ENCODE measurements at regions of chr5 and their contacts with region 1.

Region 1: DNA sequence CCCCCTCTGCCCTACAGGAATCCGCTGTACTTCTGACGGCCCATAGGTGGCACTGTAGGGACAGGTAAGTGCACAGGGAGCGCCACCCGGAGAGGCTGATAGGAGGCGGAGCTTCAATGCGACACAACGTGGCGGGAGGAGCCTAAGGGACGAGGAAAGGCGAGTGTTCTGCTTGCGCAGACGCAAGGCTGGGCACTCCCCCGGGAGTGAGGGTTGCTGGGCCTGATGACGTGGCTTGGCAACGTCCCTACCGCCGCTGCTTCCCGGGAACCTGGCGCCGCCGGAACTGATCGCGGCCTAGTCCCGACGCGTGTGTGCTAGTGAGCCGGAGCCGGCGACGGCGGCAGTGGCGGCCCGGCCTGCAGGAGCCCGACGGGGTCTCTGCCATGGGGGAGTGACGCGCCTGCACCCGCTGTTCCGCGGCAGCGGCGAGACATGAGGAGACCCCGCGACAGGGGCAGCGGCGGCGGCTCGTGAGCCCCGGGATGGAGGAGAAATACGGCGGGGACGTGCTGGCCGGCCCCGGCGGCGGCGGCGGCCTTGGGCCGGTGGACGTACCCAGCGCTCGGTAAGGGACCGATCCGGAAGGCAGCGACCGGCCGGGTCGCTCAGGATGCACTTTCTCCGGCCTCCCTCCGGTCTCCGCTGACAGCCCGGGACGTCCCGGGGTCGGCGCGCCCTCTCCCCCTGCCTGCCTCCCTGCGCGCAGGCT is at the start of gene SLC30A5:
- DNase-seq: peak; percentile 96
- H3K4me3 ChIP-seq: peak within 1 kb of the TSS; percentile 69 to 80
- H3K27ac ChIP-seq: peak within 1 kb of the TSS; percentile 77 to 90
- H3K4me1 ChIP-seq: peaks cover 0 to 5% of the 10 kb centered on the region in 2 experiments; a peak in 1 of 4 replicates
- H3K27me3 ChIP-seq: no peaks in the 10 kb centered on the region
- CTCF ChIP-seq: peak; percentile 93
- EP300 ChIP-seq: no peak; a peak in 2 of 4 replicates
- RAD21 ChIP-seq: peak; percentile 93
- polyA plus RNA-seq, gene SLC30A5: 28.5 and 32.9 TPM in 2 replicates

Region 2: GRCh38 chr5:68261569-68262065 is 832.3 kb before region 1 on chr5:
- CTCF ChIA-PET with region 1: no interaction called
- POLR2A ChIA-PET with region 1: no interaction called
- DNase-seq: no peak
- H3K4me3 ChIP-seq: no peak overlapping the region
- H3K27ac ChIP-seq: peak overlapping the region in 1 of 2 experiments; percentile 68; a peak in 2 of 4 replicates
- H3K4me1 ChIP-seq: peaks cover 15 to 49% of the 10 kb centered on the region in 2 experiments; a peak in 3 of 4 replicates
- H3K27me3 ChIP-seq: no peaks in the 10 kb centered on the region
- CTCF ChIP-seq: peak; percentile 26; the same call in 1 of the 2 replicates
- EP300 ChIP-seq: no peak
- RAD21 ChIP-seq: peak; percentile 19; the same call in 1 of the 2 replicates

Region 3: GRCh38 chr5:68872088-68872839 is 221.7 kb before region 1 on chr5:
- CTCF ChIA-PET with region 1: no interaction called
- POLR2A ChIA-PET with region 1: no interaction called
- DNase-seq: peak; percentile 74
- H3K4me3 ChIP-seq: no peak overlapping the region
- H3K27ac ChIP-seq: peak overlapping the region in 1 of 2 experiments; percentile 89; a peak in 2 of 4 replicates
- H3K4me1 ChIP-seq: peaks cover 0 to 10% of the 10 kb centered on the region in 2 experiments; a peak in 3 of 4 replicates
- H3K27me3 ChIP-seq: no peaks in the 10 kb centered on the region
- CTCF ChIP-seq: no peak
- EP300 ChIP-seq: peak; percentile 17 to 86; a peak in 3 of 4 replicates
- RAD21 ChIP-seq: no peak; the same call in 1 of the 2 replicates

Region 4: GRCh38 chr5:69024241-69024651 is 69.7 kb before region 1 on chr5:
- CTCF ChIA-PET with region 1: interaction called, 16 read pairs
- POLR2A ChIA-PET with region 1: no interaction called
- DNase-seq: peak; percentile 68
- H3K4me3 ChIP-seq: no peak overlapping the region
- H3K27ac ChIP-seq: 0 out of 4 replicates have a peak overlapping the region, but pooled peaks of 1 of the 2 experiments have one; percentile 16
- H3K4me1 ChIP-seq: peaks cover 0 to 3% of the 10 kb centered on the region in 2 experiments; a peak in 1 of 4 replicates
- H3K27me3 ChIP-seq: no peaks in the 10 kb centered on the region
- CTCF ChIP-seq: peak; percentile 68
- EP300 ChIP-seq: no peak
- RAD21 ChIP-seq: peak; percentile 92

Region 5: GRCh38 chr5:69032009-69032408 is 61.9 kb before region 1 on chr5:
- CTCF ChIA-PET with region 1: interaction called, 16 read pairs
- POLR2A ChIA-PET with region 1: interaction called, 5 read pairs
- DNase-seq: no peak
- H3K4me3 ChIP-seq: no peak overlapping the region
- H3K27ac ChIP-seq: peak overlapping the region in 1 of 2 experiments; percentile 2; a peak in 1 of 4 replicates
- H3K4me1 ChIP-seq: peaks cover 0 to 23% of the 10 kb centered on the region in 2 experiments; a peak in 2 of 4 replicates
- H3K27me3 ChIP-seq: no peaks in the 10 kb centered on the region; the same call in 1 of the 2 replicates
- CTCF ChIP-seq: no peak
- EP300 ChIP-seq: no peak
- RAD21 ChIP-seq: no peak

Region 6: DNA sequence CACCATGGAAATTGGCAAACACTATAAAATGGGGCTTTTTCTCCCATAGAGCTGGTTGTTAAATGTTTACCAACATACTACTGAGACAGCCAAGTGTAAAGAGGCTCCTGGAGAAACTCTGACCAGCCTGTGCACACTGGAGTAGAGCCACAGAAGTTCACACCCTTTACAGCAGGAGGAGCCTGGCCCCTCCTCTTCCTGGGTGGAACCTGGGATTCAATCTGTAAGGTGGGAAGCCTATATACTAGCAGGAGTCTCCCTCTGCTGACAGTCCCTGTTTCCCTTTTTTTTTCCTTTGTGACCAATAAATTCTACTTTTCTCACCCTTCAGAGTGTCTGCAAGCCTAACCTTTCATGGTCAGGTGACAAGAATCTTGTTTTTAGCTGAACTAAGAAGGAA is 10.5 kb before region 1 on chr5:
- CTCF ChIA-PET with region 1: interaction called, 31 read pairs
- POLR2A ChIA-PET with region 1: no interaction called
- DNase-seq: no peak
- H3K4me3 ChIP-seq: no peak overlapping the region
- H3K27ac ChIP-seq: no peak overlapping the region
- H3K4me1 ChIP-seq: no peaks in the 10 kb centered on the region
- H3K27me3 ChIP-seq: no peaks in the 10 kb centered on the region
- CTCF ChIP-seq: peak; percentile 18; the same call in 1 of the 2 replicates
- EP300 ChIP-seq: no peak
- RAD21 ChIP-seq: 0 out of 2 replicates have a peak, but pooled peaks have one; percentile 20

Region 7: GRCh38 chr5:69105996-69106906 is 12.3 kb after region 1 on chr5:
- CTCF ChIA-PET with region 1: interaction called, 14 read pairs
- POLR2A ChIA-PET with region 1: no interaction called
- DNase-seq: peak; percentile 16
- H3K4me3 ChIP-seq: no peak overlapping the region
- H3K27ac ChIP-seq: no peak overlapping the region
- H3K4me1 ChIP-seq: no peaks in the 10 kb centered on the region
- H3K27me3 ChIP-seq: no peaks in the 10 kb centered on the region
- CTCF ChIP-seq: no peak
- EP300 ChIP-seq: no peak
- RAD21 ChIP-seq: no peak

Region 8: GRCh38 chr5:69334793-69335268 is 240.9 kb after region 1 on chr5:
- CTCF ChIA-PET with region 1: interaction called, 22 read pairs
- POLR2A ChIA-PET with region 1: no interaction called
- DNase-seq: peak; percentile 86
- H3K4me3 ChIP-seq: no peak overlapping the region; a peak in 1 of 4 replicates
- H3K27ac ChIP-seq: no peak overlapping the region
- H3K4me1 ChIP-seq: peaks cover 0 to 4% of the 10 kb centered on the region in 2 experiments; a peak in 1 of 4 replicates
- H3K27me3 ChIP-seq: no peaks in the 10 kb centered on the region
- CTCF ChIP-seq: peak; percentile 82
- EP300 ChIP-seq: no peak
- RAD21 ChIP-seq: peak; percentile 79

Measured in SK-N-SH (cell line).